GM10248 (cell line): ENCODE measurements at regions of chr3 and their contacts with region 1.

Region 1: GRCh38 chr3:160956806-160957205 is 148.3 kb downstream of the B3GALNT1 start:
- DNase-seq: peak; percentile 29
- CTCF ChIP-seq: peak; percentile 55

Region 2: GRCh38 chr3:160968761-160969160 is 12.0 kb after region 1 on chr3:
- CTCF ChIA-PET with region 1: interaction called, 15 read pairs
- POLR2A ChIA-PET with region 1: no interaction called
- DNase-seq: no peak
- CTCF ChIP-seq: no peak